Spleen (tissue), 13 donors: ENCODE measurements at regions of chr4 and their contacts with region 1.

Region 1: DNA sequence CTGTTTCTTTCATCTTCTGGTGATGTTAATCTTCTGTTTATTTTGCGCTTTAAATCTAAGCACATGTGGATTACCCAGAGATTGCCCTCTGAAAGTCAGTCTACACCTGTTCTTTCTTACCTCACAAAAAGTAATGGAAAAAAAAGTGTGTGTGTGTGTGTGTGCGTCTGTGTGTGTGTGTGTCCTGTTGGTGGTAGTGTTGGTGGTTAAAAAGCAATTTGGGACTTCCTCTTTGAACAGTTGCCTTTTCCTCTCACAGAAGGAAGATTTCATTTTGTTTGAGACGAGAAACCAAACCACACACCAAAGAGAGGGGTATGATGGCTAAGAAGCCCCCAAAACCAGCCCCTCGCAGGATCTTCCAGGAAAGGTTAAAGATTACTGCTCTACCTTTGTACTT is at the start of gene STAP1:
- DNase-seq: no peak
- H3K4me3 ChIP-seq: peak within 1 kb of the TSS; percentile 9 to 64 (median 28)
- H3K27ac ChIP-seq: peak within 1 kb of the TSS; percentile 8 to 81 (median 71)
- H3K4me1 ChIP-seq: peaks cover 0 to 60% (median 3%) of the 10 kb centered on the region in 6 donors
- H3K27me3 ChIP-seq: no peaks in the 10 kb centered on the region
- CTCF ChIP-seq: no peak
- POLR2A ChIP-seq: peak in 2 of 3 donors; percentile 76 to 80
- total RNA-seq, gene STAP1: 22.3 to 40.1 (median 24.2) TPM

Region 2: DNA sequence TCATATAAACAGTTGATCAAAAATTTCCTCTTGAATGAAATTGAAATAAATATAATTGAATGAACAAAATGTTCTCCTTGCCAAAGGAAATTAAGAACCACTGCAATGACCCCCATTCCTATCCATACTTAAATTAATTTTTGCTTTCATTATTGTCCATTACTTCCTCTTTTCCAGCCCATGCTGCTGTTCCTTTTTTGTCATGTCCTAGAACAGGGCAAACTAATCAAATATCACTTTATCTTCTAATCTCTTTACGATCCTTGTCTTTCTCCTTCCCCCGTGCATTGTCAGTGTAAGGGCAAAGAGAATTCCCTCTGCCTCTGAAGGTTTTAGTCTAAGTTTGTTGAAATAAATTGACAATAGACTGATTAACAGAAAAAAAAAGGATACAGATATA is 216.2 kb before region 1 on chr4:
- intact Hi-C with region 1: no loop called
- DNase-seq: no peak
- H3K4me3 ChIP-seq: no peak overlapping the region
- H3K27ac ChIP-seq: no peak overlapping the region
- H3K4me1 ChIP-seq: no peaks in the 10 kb centered on the region
- H3K27me3 ChIP-seq: no peaks in the 10 kb centered on the region
- CTCF ChIP-seq: no peak
- POLR2A ChIP-seq: no peak

Region 3: DNA sequence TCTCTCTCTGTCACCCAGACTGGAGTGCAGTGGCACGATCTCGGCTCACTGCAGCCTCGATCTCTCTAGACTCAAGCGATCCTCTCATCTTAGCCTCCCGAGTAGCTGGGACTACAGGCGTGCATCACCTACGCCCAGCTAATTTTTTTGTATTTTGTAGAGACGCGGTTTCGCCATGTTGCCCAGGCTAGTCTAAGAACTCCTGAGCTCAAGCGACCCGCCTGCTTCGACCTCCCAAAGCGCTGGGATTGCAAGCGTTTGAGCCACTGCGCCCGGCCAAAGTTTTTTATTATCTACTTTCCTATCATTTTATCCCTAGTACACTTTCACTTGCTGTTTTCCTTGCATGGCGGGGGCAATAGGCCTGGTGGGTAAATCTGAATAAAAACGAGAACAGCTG is 141.1 kb after region 1 on chr4:
- intact Hi-C with region 1: loop called (anchors 10 kb)
- DNase-seq: no peak
- H3K4me3 ChIP-seq: peak overlapping the region in 6 of 8 donors; percentile 70 to 93 (median 86)
- H3K27ac ChIP-seq: peak overlapping the region in 5 of 8 donors; percentile 86 to 95 (median 94)
- H3K4me1 ChIP-seq: peaks cover 5 to 57% (median 37%) of the 10 kb centered on the region in 6 donors
- H3K27me3 ChIP-seq: no peaks in the 10 kb centered on the region
- CTCF ChIP-seq: no peak
- POLR2A ChIP-seq: no peak

Region 4: GRCh38 chr4:67885762-67886161 is 327.3 kb after region 1 on chr4:
- intact Hi-C with region 1: no loop called
- DNase-seq: no peak
- H3K4me3 ChIP-seq: no peak overlapping the region
- H3K27ac ChIP-seq: peak overlapping the region in 3 of 8 donors; percentile 1 to 3 (median 3)
- H3K4me1 ChIP-seq: no peaks in the 10 kb centered on the region
- H3K27me3 ChIP-seq: no peaks in the 10 kb centered on the region
- CTCF ChIP-seq: no peak
- POLR2A ChIP-seq: no peak